Gastrocnemius medialis (tissue), 4 donors: ENCODE measurements at regions of chr2 and their contacts with region 1.

Region 1: DNA sequence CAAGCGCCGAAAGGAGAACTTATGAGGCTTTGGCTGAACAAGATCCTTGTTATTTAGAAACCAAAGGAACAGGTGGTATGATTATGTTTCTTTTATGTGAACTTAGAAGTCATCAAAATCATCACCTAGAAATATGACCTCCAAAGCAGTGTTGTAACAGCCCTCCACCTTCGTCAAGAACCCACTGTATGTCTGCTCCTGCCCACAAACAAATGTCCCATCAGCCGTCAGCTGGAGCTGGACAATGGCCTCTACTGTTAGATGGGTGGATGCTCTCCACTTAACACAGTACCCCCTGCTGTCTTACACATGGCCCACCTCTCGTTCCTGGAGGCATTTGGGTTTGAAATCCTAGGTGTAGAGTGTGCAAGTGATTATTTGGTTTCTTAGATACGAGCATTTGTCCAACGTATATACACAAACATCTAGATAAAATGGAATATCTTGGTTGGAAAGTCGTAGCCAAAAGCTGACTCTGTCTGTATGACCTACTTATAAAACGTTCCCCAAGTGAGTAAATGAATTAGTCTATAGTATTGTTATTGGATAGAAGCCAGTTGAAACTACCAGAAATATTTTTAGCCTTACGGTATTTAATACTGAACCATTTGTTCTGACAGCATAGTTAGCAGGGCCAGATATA is 113.0 kb downstream of the CRIM1 start:
- DNase-seq: peak; percentile 23 to 51
- ATAC-seq: peak; percentile 77 to 91
- H3K4me3 ChIP-seq: no peak overlapping the region
- H3K27ac ChIP-seq: peak overlapping the region; percentile 57 to 74 (median 66)
- H3K4me1 ChIP-seq: peaks cover 33 to 52% of the 10 kb centered on the region in 2 donors
- H3K27me3 ChIP-seq: no peaks in the 10 kb centered on the region
- CTCF ChIP-seq: no peak
- POLR2A ChIP-seq: no peak

Region 2: DNA sequence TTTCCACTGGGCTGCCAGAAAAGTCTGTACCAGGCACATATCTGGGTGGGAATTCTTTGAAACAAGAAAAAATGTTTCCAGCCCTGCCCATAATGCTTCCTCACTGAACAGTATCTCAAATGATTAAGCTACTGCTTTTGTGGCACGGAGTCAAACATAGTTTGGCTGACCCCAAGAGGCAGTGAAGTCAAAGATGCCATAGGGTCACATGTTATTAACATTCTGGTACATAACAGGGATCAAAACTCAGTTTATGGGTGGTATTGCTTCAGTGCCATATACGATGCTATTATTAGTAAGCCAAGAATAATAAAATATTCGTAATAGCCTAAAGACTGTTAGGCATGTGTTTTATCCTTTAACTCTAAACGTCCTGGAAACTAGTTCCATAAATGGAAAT is 16.9 kb after region 1 on chr2:
- in situ Hi-C with region 1: no loop called
- intact Hi-C with region 1: loop called (anchors 2 kb)
- DNase-seq: no peak
- ATAC-seq: no peak
- H3K4me3 ChIP-seq: no peak overlapping the region
- H3K27ac ChIP-seq: peak overlapping the region; percentile 43 to 64 (median 60)
- H3K4me1 ChIP-seq: peaks cover 53 to 68% of the 10 kb centered on the region in 2 donors
- H3K27me3 ChIP-seq: no peaks in the 10 kb centered on the region
- CTCF ChIP-seq: no peak
- POLR2A ChIP-seq: no peak

Region 3: DNA sequence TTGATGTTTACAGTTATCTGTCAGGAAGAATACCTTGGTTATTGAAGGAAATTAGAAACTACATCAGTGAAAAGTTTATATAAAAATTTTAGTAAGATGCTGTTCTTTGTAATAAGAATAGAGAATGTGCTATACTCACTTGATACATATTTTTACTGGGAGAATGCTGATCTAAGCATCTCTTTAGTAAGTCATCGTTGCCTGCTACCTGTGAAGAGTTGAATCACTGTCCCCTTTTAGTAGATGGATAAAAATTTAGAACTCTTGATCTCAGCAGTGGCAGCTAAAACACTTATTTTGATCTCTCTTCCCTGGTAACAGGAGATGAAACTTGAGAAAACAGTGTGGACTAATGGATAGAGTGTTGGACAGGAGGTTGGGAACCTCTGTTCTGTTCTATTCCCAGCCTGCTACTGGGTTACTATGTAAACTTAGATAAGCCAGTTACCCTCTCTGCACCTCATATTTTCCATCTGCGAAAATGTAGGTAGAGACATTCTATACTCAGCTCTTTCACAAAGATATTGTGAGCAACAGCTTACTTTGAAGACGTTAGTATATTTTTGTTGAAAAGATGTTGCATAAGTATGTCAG is 29.1 kb after region 1 on chr2:
- in situ Hi-C with region 1: no loop called
- intact Hi-C with region 1: loop called (anchors 2 kb)
- DNase-seq: no peak
- ATAC-seq: peak; percentile 66 to 81
- H3K4me3 ChIP-seq: no peak overlapping the region
- H3K27ac ChIP-seq: peak overlapping the region; percentile 35 to 57 (median 46)
- H3K4me1 ChIP-seq: peaks cover 37 to 44% of the 10 kb centered on the region in 2 donors
- H3K27me3 ChIP-seq: no peaks in the 10 kb centered on the region
- CTCF ChIP-seq: no peak
- POLR2A ChIP-seq: no peak